ENCODE measurements at regions of chr19 and their contacts with region 1.

Region 1: GRCh38 chr19:16041299-16041990 is 34.9 kb upstream of the TPM4 start:
- DNase-seq: peak; percentile 82
- H3K4me3 Mint-ChIP-seq: no peak overlapping the region
- H3K27ac Mint-ChIP-seq: peak overlapping the region; percentile 64
- H3K4me1 Mint-ChIP-seq: peaks cover 17% of the 10 kb centered on the region
- H3K27me3 Mint-ChIP-seq: peaks cover 24% of the 10 kb centered on the region

Region 2: DNA sequence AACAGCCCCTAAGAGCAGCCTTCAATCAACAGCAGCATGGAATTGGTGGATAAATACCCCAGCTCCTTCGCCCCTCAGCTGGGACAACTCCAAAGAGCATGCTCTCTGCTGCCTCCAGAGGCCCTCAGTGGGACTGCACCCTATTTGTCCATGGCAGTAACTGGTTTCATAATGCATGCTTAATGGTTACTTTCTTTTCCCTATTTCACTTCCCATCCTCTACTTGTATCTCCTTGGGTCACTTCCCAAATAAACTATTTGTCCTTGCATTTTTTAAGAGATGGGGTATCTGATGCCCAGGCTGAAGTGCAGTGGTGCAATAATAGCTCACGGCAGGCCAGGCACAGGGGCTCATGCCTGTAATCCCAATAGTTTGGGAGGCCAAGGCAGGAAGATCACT is 21.3 kb after region 1 on chr19:
- CTCF ChIA-PET with region 1: interaction called, 20 read pairs
- DNase-seq: peak; percentile 83
- H3K4me3 Mint-ChIP-seq: no peak overlapping the region
- H3K27ac Mint-ChIP-seq: no peak overlapping the region
- H3K4me1 Mint-ChIP-seq: peaks cover 27% of the 10 kb centered on the region
- H3K27me3 Mint-ChIP-seq: peaks cover 35% of the 10 kb centered on the region

Region 3: DNA sequence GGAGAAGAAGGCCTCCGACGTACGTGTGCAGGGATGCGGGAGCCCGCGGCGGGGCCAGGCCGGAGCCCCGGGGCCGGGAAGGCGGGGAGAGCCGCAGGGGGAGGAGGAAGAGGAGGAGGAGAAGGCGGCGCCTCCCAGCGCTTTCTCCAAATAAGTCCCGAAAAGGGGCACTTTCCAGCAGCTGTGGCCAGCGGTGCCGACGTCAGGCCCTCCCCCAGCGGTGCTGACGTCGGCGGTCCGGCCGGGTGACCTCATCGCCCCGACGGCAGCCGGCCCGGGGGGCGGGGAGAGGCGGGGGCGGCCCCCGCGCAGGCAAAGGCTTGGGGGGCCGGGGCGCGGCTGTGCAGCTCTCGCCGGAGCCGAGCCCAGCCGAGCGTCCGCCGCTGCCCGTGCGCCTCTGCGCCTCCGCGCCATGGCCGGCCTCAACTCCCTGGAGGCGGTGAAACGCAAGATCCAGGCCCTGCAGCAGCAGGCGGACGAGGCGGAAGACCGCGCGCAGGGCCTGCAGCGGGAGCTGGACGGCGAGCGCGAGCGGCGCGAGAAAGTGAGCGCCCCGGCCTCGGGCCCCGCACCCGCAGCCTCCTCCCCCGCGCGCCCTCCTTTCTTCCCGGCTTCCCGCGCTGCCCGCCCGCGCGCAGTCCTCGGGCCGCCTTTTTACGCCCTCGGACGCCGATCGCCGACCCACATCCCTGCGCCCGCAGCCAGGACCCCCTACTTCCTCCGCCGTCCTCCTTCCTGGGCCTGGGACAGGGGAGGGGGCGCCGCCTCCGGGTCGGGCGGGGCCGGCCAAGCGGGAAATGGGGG is 34.9 kb after region 1 on chr19 and contains the start of gene TPM4:
- CTCF ChIA-PET with region 1: interaction called, 11 read pairs
- DNase-seq: peak; percentile 93
- H3K4me3 Mint-ChIP-seq: peak within 1 kb of the TSS; percentile 84
- H3K27ac Mint-ChIP-seq: peak within 1 kb of the TSS; percentile 99
- H3K4me1 Mint-ChIP-seq: peaks cover 72% of the 10 kb centered on the region
- H3K27me3 Mint-ChIP-seq: no peaks in the 10 kb centered on the region

Region 4: DNA sequence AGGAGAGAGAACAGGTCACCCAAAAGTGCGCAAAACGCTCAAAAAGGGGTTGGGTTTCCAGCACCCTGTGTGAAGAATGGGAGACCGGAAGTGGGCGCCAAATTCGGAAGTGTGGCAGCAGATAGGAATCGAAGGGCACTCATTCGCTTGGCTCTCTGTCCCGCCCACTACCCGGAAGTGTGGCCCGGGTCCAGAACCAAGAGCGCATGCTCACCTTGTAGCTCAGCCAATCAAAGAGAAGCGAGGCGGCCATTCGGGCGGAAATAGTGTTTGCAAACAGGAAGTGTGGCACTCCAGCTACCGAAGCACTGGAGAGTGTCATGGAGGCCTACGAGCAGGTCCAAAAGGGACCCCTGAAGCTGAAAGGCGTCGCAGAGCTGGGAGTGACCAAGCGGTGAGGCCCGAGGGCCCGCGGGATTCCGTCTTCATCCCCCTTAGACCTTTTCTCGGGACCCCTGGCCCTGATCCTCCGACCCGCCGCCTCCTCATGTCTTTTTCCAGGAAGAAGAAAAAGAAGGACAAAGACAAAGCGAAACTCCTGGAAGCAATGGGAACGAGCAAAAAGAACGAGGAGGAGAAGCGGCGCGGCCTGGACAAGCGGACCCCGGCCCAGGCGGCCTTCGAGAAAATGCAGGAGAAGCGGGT is 143.8 kb after region 1 on chr19 and contains the start of gene FAM32A:
- CTCF ChIA-PET with region 1: interaction called, 38 read pairs
- DNase-seq: peak; percentile 99
- H3K4me3 Mint-ChIP-seq: peak within 1 kb of the TSS; percentile 100
- H3K27ac Mint-ChIP-seq: peak within 1 kb of the TSS; percentile 97
- H3K4me1 Mint-ChIP-seq: peaks cover 40% of the 10 kb centered on the region
- H3K27me3 Mint-ChIP-seq: peaks cover 20% of the 10 kb centered on the region

Region 5: DNA sequence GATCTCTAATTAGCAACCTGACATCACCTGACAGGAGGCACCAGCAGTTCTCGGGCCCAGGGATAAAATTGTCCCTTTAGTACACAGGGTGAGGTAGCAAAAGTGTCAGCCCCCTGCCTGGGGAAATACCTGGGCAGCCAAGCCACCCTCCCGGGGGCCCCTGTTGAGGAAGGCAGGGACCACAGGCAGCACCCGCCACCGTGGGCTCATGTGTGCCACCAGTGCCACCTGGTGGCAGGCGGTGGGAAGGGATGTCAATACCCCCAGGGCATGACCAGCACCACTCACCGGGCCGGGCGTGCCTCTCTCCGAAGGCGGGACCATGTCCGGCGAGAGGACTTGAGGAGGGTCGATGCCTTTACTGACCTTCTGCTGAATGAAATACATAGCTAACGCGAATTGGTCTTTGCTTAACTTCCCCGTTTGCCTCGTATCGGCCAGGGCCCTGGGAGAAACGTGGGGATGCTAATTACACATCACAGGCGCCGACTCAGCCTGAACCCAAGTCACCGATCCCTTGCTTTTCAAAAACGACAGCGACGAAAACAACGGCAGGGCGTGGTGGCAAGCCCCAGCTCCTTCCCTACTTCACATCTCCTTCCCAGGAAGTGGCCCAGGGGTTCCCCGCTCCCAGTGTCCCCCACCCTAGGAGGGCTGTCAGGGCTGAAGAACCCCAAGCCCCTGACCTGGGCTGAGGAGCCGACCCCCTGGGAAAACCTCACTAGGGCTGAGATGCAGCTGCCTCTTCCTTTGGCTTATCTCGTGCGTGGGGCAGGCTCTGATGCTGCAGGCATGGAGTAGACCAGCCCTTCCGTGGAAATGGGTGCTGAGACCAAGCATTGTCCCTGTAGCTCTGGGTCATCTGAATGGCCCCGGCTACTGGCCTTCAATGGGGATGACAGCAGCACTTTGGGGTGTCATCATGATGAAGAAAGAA is 376.5 kb after region 1 on chr19:
- CTCF ChIA-PET with region 1: interaction called, 10 read pairs
- DNase-seq: peak; percentile 75
- H3K4me3 Mint-ChIP-seq: no peak overlapping the region
- H3K27ac Mint-ChIP-seq: no peak overlapping the region
- H3K4me1 Mint-ChIP-seq: no peaks in the 10 kb centered on the region
- H3K27me3 Mint-ChIP-seq: no peaks in the 10 kb centered on the region